Activated CD4-positive, alpha-beta T cell treated with anti-CD3 and anti-CD28 coated beads for 36 hours (primary cell): ENCODE measurements at regions of chr11 and their contacts with region 1.

Region 1: DNA sequence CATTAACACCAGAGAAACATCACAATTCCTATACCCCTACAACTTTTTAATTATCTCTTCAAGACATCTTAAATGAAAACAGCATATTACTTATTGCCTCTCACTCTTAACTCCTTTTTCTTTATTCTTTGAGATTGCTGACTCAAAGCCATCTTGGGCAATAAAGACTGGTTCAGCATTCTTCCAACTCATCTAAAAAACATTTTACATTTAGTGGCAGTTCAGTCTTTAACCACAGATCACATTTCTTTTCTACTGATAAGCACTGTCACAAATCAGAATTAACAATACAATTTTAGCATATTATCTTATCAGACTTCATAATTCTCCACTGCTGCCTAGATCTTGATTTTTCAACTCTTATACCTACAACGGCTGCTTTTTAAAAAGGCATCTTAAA is 34.0 kb downstream of the SIK3 start:
- DNase-seq: no peak
- ATAC-seq: no peak
- H3K4me3 Mint-ChIP-seq: peak overlapping the region; percentile 26
- H3K27ac Mint-ChIP-seq: peak overlapping the region; percentile 28
- H3K4me1 Mint-ChIP-seq: peaks cover 63% of the 10 kb centered on the region
- H3K27me3 Mint-ChIP-seq: no peaks in the 10 kb centered on the region

Region 2: GRCh38 chr11:116294631-116295030 is 769.6 kb before region 1 on chr11:
- CTCF ChIA-PET with region 1: no interaction called
- POLR2A ChIA-PET with region 1: no interaction called
- intact Hi-C with region 1: no loop called
- DNase-seq: no peak
- ATAC-seq: no peak
- H3K4me3 Mint-ChIP-seq: no peak overlapping the region
- H3K27ac Mint-ChIP-seq: no peak overlapping the region
- H3K4me1 Mint-ChIP-seq: no peaks in the 10 kb centered on the region
- H3K27me3 Mint-ChIP-seq: no peaks in the 10 kb centered on the region

Region 3: DNA sequence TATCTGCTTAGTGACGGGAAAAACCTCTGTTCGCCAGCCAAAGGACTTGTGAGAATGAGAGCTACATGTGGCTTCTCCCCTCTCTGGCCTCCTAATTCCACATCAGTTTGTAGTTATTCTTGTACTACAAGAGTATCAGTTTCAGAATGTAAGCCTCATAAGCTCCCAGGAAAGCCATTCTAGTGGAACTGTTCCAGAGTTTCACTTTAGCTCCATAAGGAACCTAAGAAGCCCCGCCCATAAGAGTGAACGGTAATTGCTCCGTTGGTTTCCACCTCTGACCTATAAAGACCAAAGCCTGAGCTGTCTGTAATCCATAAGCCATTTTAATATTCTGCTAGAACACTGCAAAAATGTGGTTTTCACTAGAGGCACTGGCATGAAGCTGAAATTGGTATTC is 19.1 kb before region 1 on chr11:
- CTCF ChIA-PET with region 1: interaction called, 5 read pairs
- POLR2A ChIA-PET with region 1: interaction called, 16 read pairs
- intact Hi-C with region 1: loop called in 1 of 2 experiments (anchors 2 kb)
- DNase-seq: no peak
- ATAC-seq: no peak
- H3K4me3 Mint-ChIP-seq: no peak overlapping the region
- H3K27ac Mint-ChIP-seq: peak overlapping the region; percentile 47
- H3K4me1 Mint-ChIP-seq: peaks cover 47% of the 10 kb centered on the region
- H3K27me3 Mint-ChIP-seq: no peaks in the 10 kb centered on the region

Region 4: DNA sequence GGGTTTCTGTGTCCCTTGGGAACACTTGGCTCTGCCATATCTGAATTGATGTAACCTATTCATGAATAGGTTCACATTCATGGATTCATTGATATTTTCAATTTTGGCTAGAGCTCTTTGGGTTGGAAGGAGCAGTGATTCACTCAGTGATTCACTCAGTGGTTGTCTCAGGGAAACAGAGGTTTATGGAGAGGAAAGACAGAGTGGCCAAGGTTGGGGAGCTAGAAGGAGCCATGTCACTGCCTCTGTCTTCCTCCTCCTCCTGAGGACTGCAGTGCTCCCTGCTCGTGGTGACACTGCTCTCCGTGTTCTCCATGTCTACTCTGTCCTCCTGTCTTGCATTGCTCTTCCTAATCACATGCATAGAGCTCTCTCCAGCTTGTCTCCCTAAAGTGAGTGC is 280.8 kb after region 1 on chr11:
- CTCF ChIA-PET with region 1: no interaction called
- POLR2A ChIA-PET with region 1: no interaction called
- intact Hi-C with region 1: no loop called
- DNase-seq: no peak
- ATAC-seq: no peak
- H3K4me3 Mint-ChIP-seq: no peak overlapping the region
- H3K27ac Mint-ChIP-seq: no peak overlapping the region
- H3K4me1 Mint-ChIP-seq: no peaks in the 10 kb centered on the region
- H3K27me3 Mint-ChIP-seq: no peaks in the 10 kb centered on the region